A673 (cell line): ENCODE measurements at regions of chr3 and their contacts with region 1.

Region 1: DNA sequence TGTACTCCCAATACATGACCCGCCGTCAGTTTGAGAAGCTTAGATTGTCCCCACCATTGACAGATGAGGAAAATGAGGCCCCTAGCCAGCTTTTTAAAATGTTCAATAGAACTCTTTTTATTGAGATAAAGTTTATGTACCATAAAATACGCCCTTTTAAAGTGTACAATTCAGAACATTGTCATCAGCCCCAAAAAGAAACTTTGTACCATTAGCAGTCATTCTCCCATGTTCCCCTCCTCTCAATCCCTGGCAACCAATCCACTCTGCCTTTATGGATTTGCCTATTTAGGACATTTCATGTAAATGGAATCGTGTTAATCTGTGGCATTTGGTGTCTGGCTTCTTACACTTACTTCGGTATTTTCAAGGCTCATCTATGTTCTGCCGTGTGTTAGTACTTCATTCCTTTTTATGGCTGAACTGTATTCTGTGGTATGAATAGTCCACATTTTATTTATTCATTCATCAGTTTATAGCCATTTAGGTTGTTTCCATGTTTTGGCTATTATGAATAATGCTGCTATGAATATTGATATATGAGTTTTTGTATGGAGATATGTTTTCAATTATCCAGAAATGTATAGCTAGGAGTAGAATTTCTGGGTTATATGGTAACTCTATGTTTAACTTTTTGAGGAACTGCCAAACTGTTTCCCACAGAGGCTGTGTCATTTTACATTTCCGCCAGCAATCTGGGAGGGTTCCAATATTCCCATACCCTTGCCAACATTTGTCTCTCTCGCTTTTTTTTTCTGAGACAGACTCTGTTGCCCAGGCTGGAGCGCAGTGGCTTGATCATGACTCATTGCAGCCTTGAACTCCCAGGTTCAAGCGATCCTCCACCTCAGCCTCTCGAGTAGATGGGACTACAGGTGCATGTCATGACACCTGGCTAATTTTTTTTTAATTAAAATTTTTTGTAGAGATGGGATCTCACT is 15.3 kb upstream of the PTPN23 start:
- DNase-seq: peak; percentile 23
- H3K4me3 ChIP-seq: no peak overlapping the region
- H3K27ac ChIP-seq: no peak overlapping the region
- H3K4me1 ChIP-seq: no peaks in the 10 kb centered on the region
- H3K27me3 ChIP-seq: no peaks in the 10 kb centered on the region
- CTCF ChIP-seq: no peak

Region 2: DNA sequence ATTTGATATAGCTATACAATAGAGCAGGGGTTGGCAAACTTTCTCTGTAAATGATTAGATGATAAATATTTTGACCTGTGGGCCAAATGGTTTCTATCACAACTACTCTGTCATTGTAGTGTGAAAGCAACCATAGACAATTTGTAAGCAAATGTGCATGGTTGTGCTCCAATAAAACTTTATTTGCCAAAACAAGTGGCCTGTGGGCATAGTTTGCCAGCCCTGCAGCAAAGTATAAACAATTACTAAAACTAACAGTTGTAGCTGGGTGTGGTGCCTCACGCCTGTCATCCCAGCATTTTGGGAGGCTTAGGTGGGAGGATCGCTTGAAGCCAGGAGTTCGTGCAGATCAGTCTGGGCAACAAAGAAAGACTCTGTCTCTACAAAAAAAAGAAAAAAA is 324.4 kb before region 1 on chr3:
- CTCF ChIA-PET with region 1: no interaction called
- POLR2A ChIA-PET with region 1: interaction called, 12 read pairs
- intact Hi-C with region 1: no loop called
- DNase-seq: no peak
- H3K4me3 ChIP-seq: no peak overlapping the region
- H3K27ac ChIP-seq: no peak overlapping the region
- H3K4me1 ChIP-seq: no peaks in the 10 kb centered on the region
- H3K27me3 ChIP-seq: no peaks in the 10 kb centered on the region
- CTCF ChIP-seq: no peak